Endothelial cell of umbilical vein (primary cell): ENCODE measurements at regions of chr7 and their contacts with region 1.

Region 1: DNA sequence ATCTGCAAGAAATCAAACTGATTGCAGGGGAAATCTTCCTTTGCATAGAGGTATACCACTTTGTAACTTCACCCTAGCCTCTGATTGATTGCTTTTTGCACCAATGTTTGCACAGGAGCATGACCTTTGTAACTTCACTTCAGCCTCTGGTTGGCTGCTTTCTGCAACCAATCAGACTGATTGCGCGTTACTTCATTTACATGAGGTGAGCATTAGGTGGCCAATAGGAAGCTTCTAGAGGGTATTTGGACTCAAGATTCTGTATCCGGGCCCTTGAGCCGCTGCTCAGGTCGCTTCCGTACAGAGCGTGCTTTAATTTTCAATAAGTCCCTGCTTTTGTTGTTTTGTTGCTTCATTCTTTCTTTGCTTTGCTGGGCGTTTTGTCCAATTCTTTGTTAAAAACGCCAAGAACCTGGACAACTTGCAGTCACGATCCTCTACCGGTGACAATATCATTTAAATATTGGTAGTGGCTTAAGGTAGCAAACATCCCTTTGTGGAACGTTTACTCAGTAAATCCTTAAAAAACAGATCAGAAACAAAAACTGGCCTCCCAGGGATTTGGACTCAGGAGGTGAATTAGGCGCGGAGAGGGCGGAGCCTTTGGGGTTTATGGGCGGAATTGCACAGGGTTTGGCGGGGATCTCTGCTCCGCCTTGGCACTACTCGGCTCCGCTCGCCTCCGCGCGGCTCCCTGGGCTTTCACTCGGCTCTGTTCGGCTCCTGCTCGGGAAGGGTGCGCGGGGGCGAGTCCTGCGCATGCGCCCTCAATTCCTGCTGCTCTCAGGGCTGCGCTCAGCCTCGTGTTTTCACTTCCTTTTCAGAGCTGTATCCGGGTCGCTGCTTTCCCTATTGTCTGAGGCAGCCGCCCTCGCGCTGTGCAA is at the start of gene PHF14:
- DNase-seq: peak; percentile 98
- H3K4me3 ChIP-seq: peak within 1 kb of the TSS; percentile 47 to 84 (median 80)
- H3K27ac ChIP-seq: peak within 1 kb of the TSS; percentile 64
- H3K4me1 ChIP-seq: peaks cover 19% of the 10 kb centered on the region
- H3K27me3 ChIP-seq: peaks cover 7% of the 10 kb centered on the region in 2 experiments
- CTCF ChIP-seq: no peak
- POLR2A ChIP-seq: peak; percentile 86
- total RNA-seq, gene PHF14: 38.6 and 43.4 TPM in 2 replicates

Region 2: DNA sequence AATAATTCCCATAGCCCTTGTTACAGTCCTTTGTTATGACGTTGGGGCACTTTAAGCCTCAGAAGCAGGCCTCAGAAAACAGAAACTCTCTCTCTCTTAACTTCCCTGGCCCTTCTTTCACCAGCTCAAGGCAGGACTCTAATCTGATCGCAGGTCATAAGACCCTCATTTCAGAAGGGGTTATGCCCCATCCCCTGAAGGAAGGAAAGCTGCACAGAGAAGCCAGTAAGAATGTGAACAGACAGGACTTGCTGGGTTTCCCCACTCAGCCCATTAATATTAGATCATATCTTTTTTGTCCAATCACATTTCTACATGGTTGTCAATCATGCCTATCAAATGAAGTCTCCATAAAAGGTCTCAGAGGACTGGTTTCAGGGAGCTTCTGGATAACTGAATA is 48.9 kb before region 1 on chr7:
- CTCF ChIA-PET with region 1: no interaction called
- POLR2A ChIA-PET with region 1: no interaction called
- dilution Hi-C with region 1: no loop called
- intact Hi-C with region 1: no loop called
- DNase-seq: no peak
- H3K4me3 ChIP-seq: no peak overlapping the region
- H3K27ac ChIP-seq: no peak overlapping the region
- H3K4me1 ChIP-seq: no peaks in the 10 kb centered on the region
- H3K27me3 ChIP-seq: no peaks in the 10 kb centered on the region
- CTCF ChIP-seq: no peak
- POLR2A ChIP-seq: no peak

Region 3: GRCh38 chr7:10939911-10940703 is 33.2 kb before region 1 on chr7:
- CTCF ChIA-PET with region 1: interaction called, 3 read pairs
- POLR2A ChIA-PET with region 1: interaction called, 9 read pairs
- dilution Hi-C with region 1: no loop called
- intact Hi-C with region 1: loop called (anchors 1 kb)
- DNase-seq: peak; percentile 96
- H3K4me3 ChIP-seq: peak overlapping the region; percentile 88 to 95 (median 91)
- H3K27ac ChIP-seq: peak overlapping the region; percentile 99
- H3K4me1 ChIP-seq: peaks cover 16% of the 10 kb centered on the region
- H3K27me3 ChIP-seq: no peaks in the 10 kb centered on the region
- CTCF ChIP-seq: no peak
- POLR2A ChIP-seq: peak; percentile 96